ENCODE measurements at regions of chr7 and their contacts with region 1.

Region 1: DNA sequence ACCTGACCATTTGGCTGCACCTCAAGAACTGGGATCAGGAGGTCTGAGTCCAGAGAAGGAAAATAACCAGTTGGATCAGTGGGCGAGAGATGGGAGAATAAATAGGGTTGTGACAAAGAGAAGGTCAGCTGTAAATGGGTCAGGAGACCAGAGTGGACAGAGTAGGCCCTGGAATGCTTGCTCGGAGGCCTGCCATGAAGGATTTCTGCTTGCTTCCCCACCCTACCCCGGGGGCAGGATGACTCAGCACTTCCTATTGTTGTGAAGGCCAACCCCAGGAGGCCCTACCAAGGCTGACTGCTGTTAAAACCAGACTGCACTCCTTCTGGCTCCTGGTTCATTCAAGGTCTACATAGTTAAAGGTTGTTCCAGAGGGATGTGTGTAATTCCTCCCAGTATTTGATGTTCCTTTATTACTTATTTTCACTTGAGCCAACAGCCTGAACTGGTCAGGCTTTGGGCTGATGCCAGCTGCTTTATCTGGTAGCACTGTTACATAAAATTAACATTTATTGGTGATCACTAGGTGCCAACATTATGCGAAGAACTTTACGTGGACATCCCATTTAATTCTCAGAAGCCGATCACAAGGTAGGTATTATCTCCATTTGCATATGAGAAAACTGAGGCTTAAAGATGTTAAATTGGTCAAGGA is 27.3 kb upstream of the IFRD1 start:
- DNase-seq: peak; percentile 67

Region 2: DNA sequence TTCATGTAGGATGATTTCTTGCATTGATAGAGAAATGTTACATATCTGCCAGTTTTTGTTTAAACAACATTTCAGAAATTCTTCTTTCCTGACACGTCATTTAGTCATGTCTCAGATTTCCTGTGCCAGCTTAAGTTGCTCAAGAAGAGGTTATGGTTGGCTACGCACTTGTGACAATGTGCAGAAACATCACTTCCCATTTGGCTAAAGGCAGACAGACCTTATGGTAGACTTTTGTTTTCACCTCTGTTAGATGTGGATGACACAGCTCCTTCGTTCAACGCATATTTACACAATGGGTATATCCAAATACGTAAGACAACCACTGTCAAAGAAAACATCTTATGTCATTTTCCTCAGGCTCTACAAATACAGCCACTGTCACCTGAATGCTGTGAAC is 342.5 kb before region 1 on chr7:
- in situ Hi-C with region 1: loop called (anchors 25 kb)
- DNase-seq: peak; percentile 90

Region 3: GRCh38 chr7:112882991-112883390 is 460.0 kb after region 1 on chr7:
- in situ Hi-C with region 1: no loop called
- DNase-seq: no peak